H1 (cell line): ENCODE measurements at regions of chr10 and their contacts with region 1.

Region 1: GRCh38 chr10:49280001-49280408 is 19.0 kb upstream of the C10orf71 start:
- DNase-seq: no peak
- H3K4me3 ChIP-seq: no peak overlapping the region
- H3K27ac ChIP-seq: no peak overlapping the region
- H3K4me1 ChIP-seq: no peaks in the 10 kb centered on the region; a peak in 1 of 7 replicates
- H3K27me3 ChIP-seq: no peaks in the 10 kb centered on the region
- CTCF ChIP-seq: no peak
- EP300 ChIP-seq: no peak
- POLR2A ChIP-seq: no peak
- RAD21 ChIP-seq: no peak

Region 2: GRCh38 chr10:49292565-49293207 is 12.7 kb after region 1 on chr10:
- CTCF ChIA-PET with region 1: interaction called, 19 read pairs
- POLR2A ChIA-PET with region 1: no interaction called
- DNase-seq: no peak
- H3K4me3 ChIP-seq: no peak overlapping the region
- H3K27ac ChIP-seq: no peak overlapping the region
- H3K4me1 ChIP-seq: peaks cover 0 to 2% (median 0%) of the 10 kb centered on the region in 4 experiments; a peak in 2 of 7 replicates
- H3K27me3 ChIP-seq: no peaks in the 10 kb centered on the region
- CTCF ChIP-seq: no peak
- EP300 ChIP-seq: no peak
- POLR2A ChIP-seq: no peak
- RAD21 ChIP-seq: no peak

Region 3: DNA sequence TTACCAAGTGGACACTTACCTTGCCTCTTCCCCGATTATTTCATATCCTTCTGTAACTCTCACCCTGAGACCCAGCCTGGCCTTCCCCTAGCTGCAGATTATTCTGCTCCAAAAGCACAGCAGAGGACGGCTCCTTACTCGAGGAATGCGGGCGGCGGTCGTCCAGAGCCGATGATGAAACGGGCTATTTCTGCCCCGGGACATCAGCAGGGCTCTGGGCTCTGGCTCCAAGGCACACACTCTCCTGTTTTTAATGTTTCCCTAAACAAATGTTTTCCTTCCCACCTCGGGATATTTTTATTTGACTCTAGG is 18.6 kb after region 1 on chr10:
- CTCF ChIA-PET with region 1: interaction called, 19 read pairs
- POLR2A ChIA-PET with region 1: no interaction called
- DNase-seq: no peak
- H3K4me3 ChIP-seq: no peak overlapping the region
- H3K27ac ChIP-seq: no peak overlapping the region
- H3K4me1 ChIP-seq: peaks cover 0 to 16% (median 5%) of the 10 kb centered on the region in 4 experiments; a peak in 6 of 7 replicates
- H3K27me3 ChIP-seq: no peaks in the 10 kb centered on the region
- CTCF ChIP-seq: no peak
- EP300 ChIP-seq: no peak
- POLR2A ChIP-seq: no peak
- RAD21 ChIP-seq: no peak